Sigmoid colon (tissue), 7 donors: ENCODE measurements at regions of chr9 and their contacts with region 1.

Region 1: GRCh38 chr9:132669698-132670456 is at the start of gene DDX31:
- DNase-seq: peak; percentile 94
- H3K4me3 ChIP-seq: peak within 1 kb of the TSS; percentile 78 to 86 (median 80)
- H3K27ac ChIP-seq: peak within 1 kb of the TSS; percentile 93 to 98 (median 94)
- H3K4me1 ChIP-seq: peaks cover 0 to 44% (median 38%) of the 10 kb centered on the region in 4 donors
- H3K27me3 ChIP-seq: no peaks in the 10 kb centered on the region
- CTCF ChIP-seq: no peak
- EP300 ChIP-seq: no peak
- POLR2A ChIP-seq: peak in 1 of 2 donors; percentile 12
- total RNA-seq, gene DDX31: 5.7 to 7.7 (median 7.1) TPM

Region 2: DNA sequence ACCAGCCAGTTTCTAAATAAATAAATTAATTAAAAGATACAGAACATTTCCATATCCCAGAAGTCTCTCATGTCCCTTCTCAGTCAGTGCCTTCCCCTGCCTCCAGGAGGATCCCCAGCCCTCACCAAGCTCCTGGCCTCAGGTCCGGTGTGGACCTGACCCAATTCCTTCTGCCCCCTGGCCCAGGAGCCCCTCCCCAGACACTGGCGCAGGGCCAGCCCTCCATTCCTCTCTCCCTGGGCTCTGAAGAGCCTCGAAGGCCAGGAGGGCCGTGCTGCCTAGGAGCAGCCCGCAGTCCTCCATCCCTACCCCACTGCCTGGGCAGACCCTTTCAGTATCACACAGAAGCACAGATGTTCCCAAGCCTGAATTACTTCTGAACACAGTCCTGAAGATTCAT is 149.3 kb before region 1 on chr9:
- intact Hi-C with region 1: no loop called
- DNase-seq: no peak
- H3K4me3 ChIP-seq: no peak overlapping the region
- H3K27ac ChIP-seq: no peak overlapping the region
- H3K4me1 ChIP-seq: no peaks in the 10 kb centered on the region
- H3K27me3 ChIP-seq: peaks cover 0 to 13% (median 0%) of the 10 kb centered on the region in 3 donors
- CTCF ChIP-seq: no peak
- EP300 ChIP-seq: no peak
- POLR2A ChIP-seq: no peak

Region 3: DNA sequence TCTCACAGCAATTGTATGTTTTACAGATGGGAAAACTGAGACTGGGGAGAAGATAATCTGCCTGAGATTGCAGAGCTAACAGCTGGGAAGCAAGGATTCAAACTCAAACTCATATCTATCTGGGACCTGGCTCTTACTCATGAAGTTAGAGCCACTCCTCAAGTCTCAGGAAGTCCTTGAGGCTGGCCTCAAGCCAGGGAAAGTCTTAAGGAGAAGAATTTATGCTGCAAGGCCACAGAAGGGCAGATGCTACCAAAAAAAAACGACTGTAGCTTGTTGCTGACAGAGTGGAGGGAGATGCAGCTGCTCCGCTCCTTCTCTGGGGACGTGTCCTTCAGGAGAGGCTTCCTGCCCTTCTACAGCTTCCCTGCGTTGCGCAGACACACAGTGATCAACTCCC is 47.7 kb before region 1 on chr9:
- intact Hi-C with region 1: no loop called
- DNase-seq: no peak
- H3K4me3 ChIP-seq: no peak overlapping the region
- H3K27ac ChIP-seq: no peak overlapping the region
- H3K4me1 ChIP-seq: no peaks in the 10 kb centered on the region
- H3K27me3 ChIP-seq: no peaks in the 10 kb centered on the region
- CTCF ChIP-seq: no peak
- EP300 ChIP-seq: no peak
- POLR2A ChIP-seq: no peak

Region 4: DNA sequence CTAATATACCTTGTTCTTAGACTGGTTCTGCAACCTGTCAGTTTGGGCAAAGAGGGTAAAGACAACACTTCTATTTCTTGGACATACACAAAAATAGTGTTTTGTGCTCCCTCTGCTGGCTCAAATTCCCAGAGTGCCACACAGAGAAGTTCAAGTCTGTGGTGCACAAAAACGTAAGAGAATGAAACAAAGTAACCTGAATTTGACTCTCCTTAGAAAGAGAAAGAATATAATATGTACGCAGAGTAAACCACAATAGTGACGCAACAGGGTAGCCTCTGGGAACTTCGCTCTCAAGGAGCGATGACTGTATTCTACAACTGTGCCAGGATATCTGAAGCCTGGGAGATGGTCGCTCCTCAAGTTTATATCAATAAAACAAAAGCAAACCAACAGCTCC is 18.6 kb before region 1 on chr9:
- intact Hi-C with region 1: no loop called
- DNase-seq: no peak
- H3K4me3 ChIP-seq: no peak overlapping the region
- H3K27ac ChIP-seq: no peak overlapping the region
- H3K4me1 ChIP-seq: no peaks in the 10 kb centered on the region
- H3K27me3 ChIP-seq: no peaks in the 10 kb centered on the region
- CTCF ChIP-seq: peak in 1 of 4 experiments; percentile 7
- EP300 ChIP-seq: no peak
- POLR2A ChIP-seq: no peak

Region 5: DNA sequence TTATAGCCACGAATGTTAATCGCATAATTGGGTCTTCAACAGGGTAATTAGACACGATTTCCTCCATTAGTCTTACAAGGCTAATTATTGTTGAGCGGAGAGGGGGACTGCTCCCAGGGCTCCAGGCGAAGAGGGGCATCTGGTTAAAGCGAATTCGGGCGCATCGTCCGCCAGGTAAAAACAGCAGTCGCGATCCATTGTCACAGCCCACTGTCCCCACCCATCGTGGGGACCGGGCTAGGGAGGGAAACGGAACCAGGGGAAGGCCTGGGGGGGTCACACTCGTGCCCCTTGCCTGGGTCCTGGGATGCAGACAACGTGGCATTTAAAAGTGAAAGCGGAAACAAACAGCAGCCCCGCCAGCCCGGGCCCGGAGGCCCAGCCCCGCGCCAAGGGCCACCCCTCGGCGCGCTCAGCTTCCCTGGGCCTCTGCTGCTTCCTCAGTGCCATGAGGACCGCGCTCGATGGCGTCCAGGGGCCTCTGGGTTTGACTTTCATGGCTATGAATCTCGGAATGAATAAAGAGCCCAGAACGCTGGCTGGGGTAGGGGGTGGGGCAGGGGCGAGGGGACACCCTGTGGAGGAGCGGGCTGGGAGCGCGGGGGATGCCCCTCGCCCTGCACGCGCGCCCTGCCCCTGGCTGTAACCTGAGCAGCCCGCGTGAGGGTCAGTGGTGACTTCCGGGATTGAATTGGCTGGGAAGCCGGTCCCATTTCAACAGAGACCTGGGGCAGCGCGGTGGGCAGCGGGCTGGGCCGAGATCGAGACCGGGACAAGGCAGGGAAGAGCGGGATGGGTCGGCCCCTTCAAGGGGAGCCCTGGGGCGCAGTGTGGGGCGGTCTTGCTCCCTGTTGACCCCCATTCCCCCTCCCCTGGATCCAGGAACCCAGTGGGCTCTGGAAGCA is 100.3 kb after region 1 on chr9:
- intact Hi-C with region 1: loop called (anchors 5 kb)
- DNase-seq: peak; percentile 76
- H3K4me3 ChIP-seq: peak overlapping the region; percentile 56 to 84 (median 69)
- H3K27ac ChIP-seq: peak overlapping the region; percentile 76 to 87 (median 86)
- H3K4me1 ChIP-seq: peaks cover 0 to 21% (median 18%) of the 10 kb centered on the region in 4 donors
- H3K27me3 ChIP-seq: no peaks in the 10 kb centered on the region
- CTCF ChIP-seq: no peak
- EP300 ChIP-seq: no peak
- POLR2A ChIP-seq: no peak

Region 6: DNA sequence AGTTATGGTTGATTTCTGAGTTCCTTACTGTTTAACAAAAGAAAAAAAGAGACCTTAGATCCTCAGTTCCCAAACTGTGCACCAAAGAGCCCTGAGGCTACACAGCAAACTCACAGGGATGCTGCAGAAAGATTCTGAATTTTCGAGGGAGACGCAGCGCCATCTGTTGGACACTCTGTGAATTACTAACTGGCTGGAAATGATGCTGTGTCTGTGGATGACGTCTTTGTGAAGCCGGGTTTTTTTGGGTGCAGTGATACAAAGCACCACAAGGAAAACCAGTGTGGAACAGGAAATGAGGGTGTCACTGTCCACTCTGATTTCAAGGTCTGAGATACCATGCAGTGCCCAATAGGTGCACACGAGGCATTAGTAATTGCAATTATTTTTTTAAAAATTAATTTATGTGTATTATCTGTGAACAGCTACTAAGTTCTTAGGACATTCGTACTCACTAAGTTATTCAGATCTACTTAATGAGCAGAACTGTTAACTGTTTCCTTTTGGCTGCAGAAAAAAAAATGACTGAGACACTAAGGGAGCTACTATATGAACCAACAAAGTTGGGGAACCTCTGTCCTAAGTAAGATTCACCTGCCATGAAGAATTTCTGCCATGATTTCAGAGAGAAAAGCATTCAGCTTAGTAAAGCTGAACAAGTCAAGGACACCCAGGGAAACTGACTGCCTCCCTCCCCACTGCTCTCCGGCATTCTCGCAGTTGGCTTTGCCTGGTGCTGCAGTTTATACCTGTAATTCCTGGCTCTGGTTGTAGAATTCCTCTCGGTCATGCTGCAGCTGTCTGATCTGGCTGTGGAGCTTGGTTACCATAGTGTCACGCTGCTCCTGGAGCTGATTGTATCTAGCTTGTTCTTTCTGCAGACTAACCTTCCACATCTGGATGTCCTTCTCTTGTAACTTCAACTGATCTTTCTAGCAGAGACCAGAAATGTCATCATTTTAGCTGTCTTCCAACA is 232.3 kb after region 1 on chr9:
- intact Hi-C with region 1: loop called (anchors 5 kb)
- DNase-seq: peak; percentile 82
- H3K4me3 ChIP-seq: no peak overlapping the region
- H3K27ac ChIP-seq: peak overlapping the region in 2 of 4 donors; percentile 45 to 57
- H3K4me1 ChIP-seq: peaks cover 0 to 3% (median 0%) of the 10 kb centered on the region in 4 donors
- H3K27me3 ChIP-seq: no peaks in the 10 kb centered on the region
- CTCF ChIP-seq: peak; percentile 87 to 97 (median 92)
- EP300 ChIP-seq: no peak
- POLR2A ChIP-seq: no peak